Stomach (tissue), 19 donors: ENCODE measurements at regions of chr7 and their contacts with region 1.

Region 1: GRCh38 chr7:5083311-5083711 is 37.7 kb downstream of the RBAK start:
- DNase-seq: no peak
- H3K4me3 ChIP-seq: no peak overlapping the region
- H3K27ac ChIP-seq: no peak overlapping the region
- H3K4me1 ChIP-seq: peaks cover 0 to 6% (median 6%) of the 10 kb centered on the region in 4 donors
- H3K27me3 ChIP-seq: peaks cover 5 to 59% (median 6%) of the 10 kb centered on the region in 3 donors
- CTCF ChIP-seq: no peak
- EP300 ChIP-seq: no peak
- POLR2A ChIP-seq: no peak

Region 2: DNA sequence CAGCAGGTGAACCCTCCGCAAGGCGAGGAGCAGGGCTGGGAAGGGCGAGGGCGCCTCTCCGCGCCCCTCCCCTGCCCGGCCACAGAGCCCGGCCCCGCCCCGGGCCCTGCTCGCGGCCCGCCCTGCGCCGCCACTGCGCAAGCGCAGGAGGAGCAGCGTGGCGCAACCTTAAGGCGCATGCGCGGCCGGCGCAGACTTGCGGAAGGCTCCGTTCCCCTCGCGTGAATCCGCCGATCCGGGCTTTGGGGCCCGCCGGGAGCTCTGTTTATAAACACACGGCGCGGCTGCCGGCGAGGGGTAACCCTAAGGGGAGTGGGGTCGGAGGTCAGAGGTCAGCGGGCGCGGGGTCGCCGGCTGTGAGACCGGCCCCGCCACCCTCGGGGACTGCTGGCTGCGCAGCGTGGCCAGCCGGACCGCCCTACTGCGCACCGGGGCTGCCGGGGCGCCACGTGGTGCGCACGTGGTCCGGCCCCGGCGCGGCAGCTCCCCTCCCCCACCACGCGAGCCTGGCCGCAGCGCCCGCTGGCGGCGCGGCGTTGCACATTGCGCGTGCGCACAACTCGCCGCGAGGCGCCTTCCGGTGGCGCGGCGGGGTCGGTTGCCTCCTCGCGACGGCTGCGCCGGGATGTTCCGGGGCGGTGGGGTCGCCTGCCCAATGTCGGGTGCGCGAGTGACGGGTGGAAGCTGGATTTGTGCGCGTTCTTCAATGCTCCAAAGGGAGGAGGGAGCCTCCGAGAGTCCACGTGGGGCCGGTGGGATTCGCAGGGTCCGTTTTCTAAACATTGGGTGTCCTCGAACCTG is 441.4 kb before region 1 on chr7:
- intact Hi-C with region 1: no loop called
- DNase-seq: peak; percentile 97 to 99
- H3K4me3 ChIP-seq: peak overlapping the region; percentile 46 to 64 (median 62)
- H3K27ac ChIP-seq: peak overlapping the region; percentile 83 to 93 (median 92)
- H3K4me1 ChIP-seq: peaks cover 6 to 16% (median 14%) of the 10 kb centered on the region in 4 donors
- H3K27me3 ChIP-seq: no peaks in the 10 kb centered on the region
- CTCF ChIP-seq: peak in 3 of 7 experiments; percentile 31 to 49 (median 37)
- EP300 ChIP-seq: peak; percentile 16
- POLR2A ChIP-seq: no peak

Region 3: DNA sequence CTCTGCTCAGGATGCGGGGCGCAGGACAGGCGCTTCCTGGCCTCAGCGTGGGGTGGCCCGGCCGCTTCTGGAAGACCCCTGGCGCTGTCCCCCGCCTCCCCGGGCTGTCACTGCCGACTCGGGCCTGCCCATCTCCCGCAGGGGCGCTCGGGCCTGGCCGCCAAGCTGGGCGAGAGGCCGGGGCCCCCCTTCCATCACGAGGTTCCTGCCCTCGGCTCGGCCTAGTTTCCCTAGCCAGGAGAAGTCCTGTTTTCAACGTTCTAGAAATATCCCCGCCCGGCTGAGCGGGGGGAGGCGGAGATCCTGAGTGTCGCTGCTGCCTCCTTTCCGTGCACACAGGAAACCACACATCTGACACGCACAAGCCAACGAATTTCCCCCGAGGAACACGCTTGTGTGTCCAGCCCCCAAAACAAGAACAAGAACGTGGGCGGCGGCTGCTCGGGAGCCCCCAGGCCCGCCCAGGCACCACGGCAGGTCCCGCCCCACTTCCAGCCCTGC is 274.2 kb before region 1 on chr7:
- intact Hi-C with region 1: loop called (anchors 10 kb)
- DNase-seq: no peak
- H3K4me3 ChIP-seq: peak overlapping the region in 1 of 4 donors; percentile 32
- H3K27ac ChIP-seq: no peak overlapping the region
- H3K4me1 ChIP-seq: no peaks in the 10 kb centered on the region
- H3K27me3 ChIP-seq: peaks cover 0 to 54% (median 0%) of the 10 kb centered on the region in 3 donors
- CTCF ChIP-seq: no peak
- EP300 ChIP-seq: no peak
- POLR2A ChIP-seq: no peak

Region 4: GRCh38 chr7:4973728-4974198 is 109.5 kb before region 1 on chr7:
- intact Hi-C with region 1: loop called (anchors 10 kb)
- DNase-seq: peak; percentile 90 to 97
- H3K4me3 ChIP-seq: peak overlapping the region; percentile 68 to 85 (median 74)
- H3K27ac ChIP-seq: peak overlapping the region; percentile 87 to 99 (median 91)
- H3K4me1 ChIP-seq: peaks cover 0 to 37% (median 13%) of the 10 kb centered on the region in 4 donors
- H3K27me3 ChIP-seq: no peaks in the 10 kb centered on the region
- CTCF ChIP-seq: peak in 4 of 7 experiments; percentile 66 to 83 (median 74)
- EP300 ChIP-seq: no peak
- POLR2A ChIP-seq: no peak

Region 5: DNA sequence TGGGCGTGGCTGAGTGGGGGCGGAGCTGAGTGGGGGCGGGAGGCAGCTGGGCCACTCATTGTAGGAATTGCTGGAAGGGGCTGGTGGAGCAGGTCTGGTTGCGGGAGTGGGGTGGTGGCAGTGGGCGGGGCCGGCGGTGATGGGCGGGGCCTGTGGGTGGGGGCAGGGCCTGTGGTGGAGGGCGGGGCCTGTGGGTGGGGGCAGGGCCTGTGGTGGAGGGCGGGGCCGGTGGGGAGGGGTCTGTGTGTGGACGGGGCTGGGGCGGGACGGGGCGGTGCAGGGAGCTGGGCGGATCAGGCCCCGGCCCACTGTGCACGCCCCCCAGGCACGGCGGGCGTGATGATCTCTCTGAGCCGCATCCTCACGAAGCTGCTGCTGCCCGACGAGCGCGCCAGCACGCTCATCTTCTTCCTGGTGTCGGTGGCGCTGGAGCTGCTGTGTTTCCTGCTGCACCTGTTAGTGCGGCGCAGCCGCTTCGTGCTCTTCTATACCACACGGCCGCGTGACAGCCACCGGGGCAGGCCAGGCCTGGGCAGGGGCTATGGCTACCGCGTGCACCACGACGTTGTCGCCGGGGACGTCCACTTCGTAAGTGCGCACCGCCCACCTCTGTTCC is 213.4 kb after region 1 on chr7:
- intact Hi-C with region 1: no loop called
- DNase-seq: peak in 1 of 2 donors; percentile 76
- H3K4me3 ChIP-seq: peak overlapping the region in 2 of 4 donors; percentile 9 to 22
- H3K27ac ChIP-seq: no peak overlapping the region
- H3K4me1 ChIP-seq: peaks cover 0 to 14% (median 3%) of the 10 kb centered on the region in 4 donors
- H3K27me3 ChIP-seq: peaks cover 0 to 30% (median 3%) of the 10 kb centered on the region in 3 donors
- CTCF ChIP-seq: no peak
- EP300 ChIP-seq: no peak
- POLR2A ChIP-seq: no peak

Region 6: GRCh38 chr7:5549096-5549763 is 465.9 kb after region 1 on chr7:
- intact Hi-C with region 1: no loop called
- DNase-seq: peak; percentile 69 to 92
- H3K4me3 ChIP-seq: no peak overlapping the region
- H3K27ac ChIP-seq: peak overlapping the region in 4 of 5 donors; percentile 22 to 71 (median 50)
- H3K4me1 ChIP-seq: peaks cover 0 to 21% (median 6%) of the 10 kb centered on the region in 4 donors
- H3K27me3 ChIP-seq: no peaks in the 10 kb centered on the region
- CTCF ChIP-seq: no peak
- EP300 ChIP-seq: no peak
- POLR2A ChIP-seq: no peak